Activated B cell treated with CpG ODN at 0.5 μM for 24 hours (primary cell): ENCODE measurements at regions of chr4 and their contacts with region 1.

Region 1: GRCh38 chr4:40719008-40719623 is 30.6 kb upstream of the NSUN7 start:
- DNase-seq: no peak
- ATAC-seq: no peak
- H3K4me3 Mint-ChIP-seq: no peak overlapping the region
- H3K27ac Mint-ChIP-seq: no peak overlapping the region
- H3K4me1 Mint-ChIP-seq: peaks cover 3% of the 10 kb centered on the region
- H3K27me3 Mint-ChIP-seq: no peaks in the 10 kb centered on the region
- CTCF ChIP-seq: no peak

Region 2: DNA sequence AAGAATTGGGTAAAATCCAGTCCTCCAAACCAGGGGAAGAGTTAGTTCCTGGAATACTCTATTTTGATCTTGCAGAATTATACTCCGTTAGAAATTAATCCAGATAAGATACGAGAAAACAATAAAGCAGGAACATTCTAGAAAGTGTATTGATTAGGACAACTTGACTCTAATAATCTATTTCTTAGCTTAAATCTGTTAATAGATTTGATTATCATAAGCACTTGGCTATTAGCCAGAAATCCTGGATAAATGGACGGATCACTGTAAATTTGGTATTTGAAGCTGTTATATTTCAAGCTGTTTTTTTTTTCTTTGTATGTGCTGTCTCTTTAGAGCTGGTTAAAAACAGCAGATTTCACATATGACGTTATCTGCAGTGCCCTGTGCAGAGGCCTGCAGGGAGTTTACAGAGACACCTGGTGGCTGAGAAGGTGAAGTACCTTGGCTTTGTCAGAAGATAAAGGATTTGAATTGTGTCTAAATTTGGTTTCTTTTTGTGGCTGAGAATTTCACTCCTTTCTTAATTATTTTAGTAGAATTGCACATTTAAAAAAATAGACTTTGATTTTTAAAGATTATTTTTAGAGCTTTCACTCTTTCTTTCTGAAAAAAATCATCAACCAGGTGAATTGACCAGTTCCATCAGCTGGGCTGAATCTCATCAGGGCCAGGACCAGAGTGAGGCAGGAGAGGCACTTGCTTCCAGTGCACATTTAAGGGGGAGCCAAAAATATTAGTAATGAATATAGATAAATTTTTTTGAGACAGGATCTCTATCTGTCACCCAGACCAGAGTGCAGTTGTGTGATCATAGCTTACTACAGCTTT is 393.7 kb before region 1 on chr4:
- CTCF ChIA-PET with region 1: interaction called, 3 read pairs
- POLR2A ChIA-PET with region 1: no interaction called
- intact Hi-C with region 1: loop called (anchors 5 kb)
- DNase-seq: no peak
- ATAC-seq: peak; percentile 100
- H3K4me3 Mint-ChIP-seq: no peak overlapping the region
- H3K27ac Mint-ChIP-seq: no peak overlapping the region
- H3K4me1 Mint-ChIP-seq: peaks cover 14% of the 10 kb centered on the region
- H3K27me3 Mint-ChIP-seq: peaks cover 5% of the 10 kb centered on the region
- CTCF ChIP-seq: no peak

Region 3: DNA sequence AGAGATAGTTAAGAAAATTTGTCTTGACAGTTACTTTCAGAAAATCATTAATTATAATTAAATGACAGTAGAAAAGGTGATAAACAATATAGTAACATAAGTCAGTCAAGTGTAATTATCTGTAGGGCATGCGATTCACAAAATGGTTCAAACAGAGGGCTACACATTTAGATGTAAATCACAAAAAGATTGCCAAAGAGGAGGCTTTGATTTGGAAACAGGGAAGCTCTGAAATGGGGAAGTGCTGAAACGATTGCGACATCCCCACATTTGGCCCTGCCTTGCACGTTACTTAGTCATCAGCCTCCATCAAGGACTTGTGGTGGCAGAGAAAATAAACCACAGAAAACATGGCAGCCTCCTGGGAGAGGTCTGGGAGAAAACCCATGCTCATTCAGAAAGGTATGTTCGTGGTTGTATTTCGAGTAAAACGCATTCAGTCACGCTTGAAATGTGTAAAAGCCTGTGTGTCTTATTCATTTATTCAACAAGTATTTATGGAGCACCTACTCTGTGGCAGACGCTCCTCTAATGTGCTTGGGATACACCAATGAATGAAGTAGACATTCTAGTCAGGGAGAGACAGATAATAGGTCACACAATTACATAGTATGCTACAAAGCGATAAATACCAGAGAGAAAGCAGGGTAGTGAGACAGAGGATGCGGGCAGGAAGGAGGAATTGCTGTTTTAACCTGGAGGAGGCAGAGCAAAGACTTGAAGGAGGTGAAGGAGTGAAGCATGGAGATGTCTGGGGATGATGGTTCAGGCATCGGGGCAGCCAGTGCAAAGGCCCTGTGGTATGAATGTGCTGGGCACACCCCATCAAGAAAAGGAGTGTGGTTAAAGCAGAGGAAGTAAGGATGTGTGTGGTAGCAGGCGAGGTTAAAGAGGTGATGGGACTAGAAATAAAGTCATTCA is 97.3 kb before region 1 on chr4:
- CTCF ChIA-PET with region 1: no interaction called
- POLR2A ChIA-PET with region 1: no interaction called
- intact Hi-C with region 1: loop called (anchors 2 kb)
- DNase-seq: peak; percentile 18
- ATAC-seq: peak; percentile 93
- H3K4me3 Mint-ChIP-seq: peak overlapping the region; percentile 39
- H3K27ac Mint-ChIP-seq: peak overlapping the region; percentile 54
- H3K4me1 Mint-ChIP-seq: peaks cover 23% of the 10 kb centered on the region
- H3K27me3 Mint-ChIP-seq: no peaks in the 10 kb centered on the region
- CTCF ChIP-seq: no peak